Dendritic cell treated with granulocyte-macrophage colony-stimulating factor and Interleukin-4, amounts not matched to agents 40 ng/mL and 50 ng/mL, for 4 days (primary cell): ENCODE measurements at regions of chr22 and their contacts with region 1.

Region 1: GRCh38 chr22:35350539-35351503 is 30.1 kb upstream of the HMOX1 start:
- H3K4me3 Mint-ChIP-seq: peak overlapping the region; percentile 84
- H3K27ac Mint-ChIP-seq: peak overlapping the region; percentile 87
- H3K4me1 Mint-ChIP-seq: peaks cover 78% of the 10 kb centered on the region
- H3K27me3 Mint-ChIP-seq: no peaks in the 10 kb centered on the region

Region 2: DNA sequence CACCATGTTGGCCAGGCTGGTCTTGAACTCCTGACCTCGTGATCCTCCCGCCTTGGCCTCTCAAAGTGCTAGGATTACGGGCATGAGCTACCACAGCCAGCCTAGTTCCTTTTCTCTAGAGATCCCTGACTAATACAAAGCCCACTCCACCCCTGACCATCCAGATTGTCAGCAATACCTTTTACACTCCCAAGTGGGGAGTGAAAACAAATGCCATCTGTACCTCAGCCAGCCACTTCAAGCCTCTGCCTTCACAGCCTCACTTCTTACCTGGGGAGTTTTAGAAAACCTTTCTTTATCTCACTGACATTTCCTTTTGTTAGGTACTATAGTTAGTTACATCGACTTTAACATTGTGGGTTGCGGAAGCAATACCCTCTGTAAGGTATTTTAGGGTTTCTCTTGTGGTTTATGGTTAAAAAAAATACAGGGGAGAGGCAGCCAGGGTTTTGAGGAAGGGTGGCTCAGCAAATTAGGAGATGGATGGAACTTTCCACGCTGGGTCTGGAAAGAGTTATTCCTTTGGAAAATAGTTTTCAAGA is 42.3 kb before region 1 on chr22:
- intact Hi-C with region 1: no loop called
- H3K4me3 Mint-ChIP-seq: no peak overlapping the region
- H3K27ac Mint-ChIP-seq: peak overlapping the region; percentile 72
- H3K4me1 Mint-ChIP-seq: peaks cover 95% of the 10 kb centered on the region
- H3K27me3 Mint-ChIP-seq: no peaks in the 10 kb centered on the region

Region 3: DNA sequence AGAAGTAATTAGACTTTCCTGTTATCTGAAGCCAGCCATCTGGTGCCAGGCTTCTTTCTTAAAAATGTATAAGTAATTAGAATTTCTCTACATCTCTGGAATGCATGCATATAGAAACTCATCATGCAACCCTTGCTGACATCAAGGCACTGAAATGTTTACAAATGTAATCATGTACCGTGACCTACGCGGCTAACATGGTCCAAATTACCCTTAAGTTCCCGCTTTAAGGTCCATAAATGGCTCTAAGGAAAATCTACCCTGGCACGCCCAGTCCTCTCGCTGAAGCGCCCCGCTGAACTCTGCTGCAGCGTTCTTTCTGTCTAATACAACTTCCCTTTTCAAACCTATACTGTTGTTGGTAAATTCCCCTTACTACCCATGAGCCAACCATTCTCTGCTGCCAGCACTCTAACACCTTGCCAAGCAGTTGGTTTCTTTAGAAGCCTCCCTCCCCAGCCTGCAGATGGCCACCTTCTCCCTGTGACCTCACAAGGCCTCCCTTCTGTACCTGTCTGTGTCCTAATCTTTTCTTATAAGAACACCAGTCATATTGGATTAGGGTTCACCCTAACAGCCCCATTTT is 16.6 kb after region 1 on chr22:
- intact Hi-C with region 1: loop called (anchors 2 kb)
- H3K4me3 Mint-ChIP-seq: no peak overlapping the region
- H3K27ac Mint-ChIP-seq: peak overlapping the region; percentile 74
- H3K4me1 Mint-ChIP-seq: peaks cover 81% of the 10 kb centered on the region
- H3K27me3 Mint-ChIP-seq: peaks cover 4% of the 10 kb centered on the region

Region 4: GRCh38 chr22:35376728-35377472 is 26.1 kb after region 1 on chr22:
- intact Hi-C with region 1: loop called (anchors 1 kb)
- H3K4me3 Mint-ChIP-seq: peak overlapping the region; percentile 74
- H3K27ac Mint-ChIP-seq: peak overlapping the region; percentile 92
- H3K4me1 Mint-ChIP-seq: peaks cover 83% of the 10 kb centered on the region
- H3K27me3 Mint-ChIP-seq: no peaks in the 10 kb centered on the region

Region 5: DNA sequence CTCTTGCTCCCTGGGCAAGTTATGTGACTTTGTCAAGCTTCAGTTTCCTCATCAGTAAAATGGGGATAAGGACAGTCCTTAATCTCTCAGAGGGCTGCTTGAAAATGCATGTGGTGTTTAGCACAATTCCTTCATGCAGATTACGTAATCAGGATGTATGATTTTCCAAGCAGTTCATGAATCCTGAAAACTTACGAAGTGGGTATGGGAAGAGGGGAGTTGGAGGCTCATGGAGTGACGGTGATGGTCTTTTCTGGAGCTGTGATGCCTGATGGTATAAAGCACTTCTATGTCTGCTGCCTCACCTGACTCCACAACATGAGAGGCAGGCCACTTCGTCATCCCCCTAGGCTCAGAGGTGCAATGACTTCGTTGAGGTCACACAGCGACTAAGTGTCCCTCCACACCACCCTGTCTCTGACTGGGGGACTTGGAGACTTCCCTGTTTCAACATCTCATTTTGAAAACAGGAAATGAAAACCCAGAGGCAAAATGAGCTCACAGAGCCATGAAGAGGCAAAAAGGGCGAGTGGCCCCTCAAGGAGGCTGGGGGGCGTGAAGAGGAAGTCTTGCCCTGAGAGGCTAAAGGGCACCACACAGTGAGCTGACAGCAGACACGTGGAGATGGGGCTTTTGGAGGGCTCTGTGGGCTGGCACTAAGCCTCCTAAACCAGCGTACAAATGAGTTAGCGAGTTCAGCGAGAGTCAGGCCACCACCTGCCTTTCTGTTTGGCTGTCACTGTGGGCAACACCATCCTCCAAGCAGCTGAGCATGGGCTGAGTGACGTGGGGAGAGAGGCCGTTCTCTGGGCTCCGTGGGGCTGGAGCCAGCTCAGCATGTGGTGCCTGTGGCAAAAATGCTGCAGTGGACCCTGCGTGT is 59.2 kb after region 1 on chr22:
- intact Hi-C with region 1: loop called (anchors 1 kb)
- H3K4me3 Mint-ChIP-seq: peak overlapping the region; percentile 58
- H3K27ac Mint-ChIP-seq: peak overlapping the region; percentile 82
- H3K4me1 Mint-ChIP-seq: peaks cover 61% of the 10 kb centered on the region
- H3K27me3 Mint-ChIP-seq: no peaks in the 10 kb centered on the region

Region 6: GRCh38 chr22:35477911-35478582 is 127.2 kb after region 1 on chr22:
- intact Hi-C with region 1: no loop called
- H3K4me3 Mint-ChIP-seq: no peak overlapping the region
- H3K27ac Mint-ChIP-seq: no peak overlapping the region
- H3K4me1 Mint-ChIP-seq: peaks cover 32% of the 10 kb centered on the region
- H3K27me3 Mint-ChIP-seq: peaks cover 71% of the 10 kb centered on the region

Region 7: GRCh38 chr22:35572556-35572955 is 221.7 kb after region 1 on chr22:
- intact Hi-C with region 1: no loop called
- H3K4me3 Mint-ChIP-seq: no peak overlapping the region
- H3K27ac Mint-ChIP-seq: no peak overlapping the region
- H3K4me1 Mint-ChIP-seq: no peaks in the 10 kb centered on the region
- H3K27me3 Mint-ChIP-seq: peaks cover 18% of the 10 kb centered on the region

Region 8: GRCh38 chr22:35582861-35583670 is 232.2 kb after region 1 on chr22:
- intact Hi-C with region 1: loop called (anchors 1 kb)
- H3K4me3 Mint-ChIP-seq: no peak overlapping the region
- H3K27ac Mint-ChIP-seq: no peak overlapping the region
- H3K4me1 Mint-ChIP-seq: peaks cover 12% of the 10 kb centered on the region
- H3K27me3 Mint-ChIP-seq: peaks cover 10% of the 10 kb centered on the region

Region 9: GRCh38 chr22:35601743-35602630 is 251.2 kb after region 1 on chr22:
- intact Hi-C with region 1: loop called (anchors 5 kb)
- H3K4me3 Mint-ChIP-seq: no peak overlapping the region
- H3K27ac Mint-ChIP-seq: no peak overlapping the region
- H3K4me1 Mint-ChIP-seq: peaks cover 19% of the 10 kb centered on the region
- H3K27me3 Mint-ChIP-seq: peaks cover 12% of the 10 kb centered on the region

Region 10: DNA sequence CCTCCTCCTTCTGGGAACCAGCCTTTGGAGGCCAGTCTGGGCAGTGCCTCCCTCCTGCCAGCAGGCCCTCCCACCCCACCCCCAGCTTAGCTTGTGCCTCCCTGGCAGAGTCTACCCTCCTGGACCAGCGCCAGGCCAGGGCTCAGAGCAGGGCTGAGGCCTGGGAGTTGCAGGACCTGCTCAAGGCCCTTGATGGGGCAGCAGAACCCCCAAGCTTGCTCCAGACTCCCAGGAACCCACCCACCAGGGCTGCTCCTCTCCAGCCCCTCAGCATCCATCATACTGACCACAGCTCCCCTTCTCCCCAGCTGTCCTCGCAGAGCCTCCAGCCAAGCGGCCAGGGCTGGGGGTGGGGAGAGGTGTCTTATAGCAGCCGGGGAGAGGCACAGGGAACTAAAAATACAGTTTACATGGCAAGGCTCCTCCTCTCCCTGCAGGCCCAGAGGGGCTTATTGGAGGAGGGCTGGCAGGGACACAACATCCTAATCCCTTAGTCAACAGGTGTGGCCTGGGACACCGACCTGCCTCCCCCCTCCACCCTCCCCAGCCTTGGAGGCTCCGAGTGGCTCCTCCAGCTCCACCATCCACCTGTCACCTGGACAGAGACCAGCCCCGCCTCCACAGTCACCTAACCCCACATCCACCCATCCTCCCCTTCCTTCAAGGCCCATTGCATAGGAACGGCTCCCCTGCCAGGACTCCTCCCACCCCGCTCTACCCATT is 271.5 kb after region 1 on chr22:
- intact Hi-C with region 1: loop called (anchors 2 kb)
- H3K4me3 Mint-ChIP-seq: no peak overlapping the region
- H3K27ac Mint-ChIP-seq: no peak overlapping the region
- H3K4me1 Mint-ChIP-seq: peaks cover 20% of the 10 kb centered on the region
- H3K27me3 Mint-ChIP-seq: peaks cover 20% of the 10 kb centered on the region